ENCODE measurements at regions of chr10 and their contacts with region 1.

Region 1: DNA sequence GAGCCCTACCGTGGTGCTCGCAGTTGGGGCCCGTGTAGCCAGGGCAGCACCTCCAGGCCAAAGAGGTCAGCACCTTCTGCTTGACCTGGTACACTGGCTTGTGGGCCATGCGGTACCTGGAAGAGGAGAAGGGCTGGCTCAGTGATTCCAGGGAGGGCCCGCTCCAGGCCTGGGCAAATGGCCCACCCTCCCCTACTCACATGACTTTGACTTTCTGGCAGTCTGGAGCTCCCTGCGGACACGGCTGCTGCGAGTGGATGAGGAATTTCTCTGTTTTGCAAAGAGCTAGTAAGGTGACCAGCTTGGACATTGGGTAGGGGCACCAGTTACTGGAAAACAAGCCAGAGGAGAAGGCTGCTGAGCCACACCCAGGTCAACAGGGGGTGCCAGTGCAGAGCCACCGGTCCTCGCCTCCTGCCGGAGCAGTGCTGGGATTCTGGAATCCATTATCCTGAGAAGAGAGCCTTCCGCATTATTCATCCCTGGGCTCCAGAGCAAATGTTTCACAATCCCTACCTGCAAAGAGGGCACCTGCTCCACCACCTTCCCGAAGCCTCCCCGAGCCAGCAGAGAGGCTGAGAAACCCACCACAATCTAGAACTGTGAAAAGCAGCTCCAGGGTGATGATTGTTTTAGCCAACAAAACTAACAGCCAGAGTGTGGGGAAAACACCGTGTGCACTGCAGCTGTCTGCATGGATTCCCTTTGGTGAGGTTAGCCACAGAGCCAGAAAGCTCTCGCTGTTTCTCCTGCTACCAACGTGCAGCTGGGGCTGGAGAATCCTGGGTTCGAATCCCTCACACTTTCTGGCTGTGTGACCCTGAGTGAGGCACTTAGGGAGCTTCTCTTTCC is 11.8 kb downstream of the MMRN2 start:
- DNase-seq: peak; percentile 44
- ATAC-seq: peak; percentile 74
- H3K4me3 ChIP-seq: no peak overlapping the region
- H3K27ac ChIP-seq: no peak overlapping the region
- H3K4me1 ChIP-seq: peaks cover 31% of the 10 kb centered on the region
- H3K27me3 ChIP-seq: peaks cover 5 to 32% of the 10 kb centered on the region in 2 experiments; a peak in 3 of 5 replicates
- CTCF ChIP-seq: peak; percentile 67
- EP300 ChIP-seq: no peak
- POLR2A ChIP-seq: no peak
- RAD21 ChIP-seq: no peak

Region 2: DNA sequence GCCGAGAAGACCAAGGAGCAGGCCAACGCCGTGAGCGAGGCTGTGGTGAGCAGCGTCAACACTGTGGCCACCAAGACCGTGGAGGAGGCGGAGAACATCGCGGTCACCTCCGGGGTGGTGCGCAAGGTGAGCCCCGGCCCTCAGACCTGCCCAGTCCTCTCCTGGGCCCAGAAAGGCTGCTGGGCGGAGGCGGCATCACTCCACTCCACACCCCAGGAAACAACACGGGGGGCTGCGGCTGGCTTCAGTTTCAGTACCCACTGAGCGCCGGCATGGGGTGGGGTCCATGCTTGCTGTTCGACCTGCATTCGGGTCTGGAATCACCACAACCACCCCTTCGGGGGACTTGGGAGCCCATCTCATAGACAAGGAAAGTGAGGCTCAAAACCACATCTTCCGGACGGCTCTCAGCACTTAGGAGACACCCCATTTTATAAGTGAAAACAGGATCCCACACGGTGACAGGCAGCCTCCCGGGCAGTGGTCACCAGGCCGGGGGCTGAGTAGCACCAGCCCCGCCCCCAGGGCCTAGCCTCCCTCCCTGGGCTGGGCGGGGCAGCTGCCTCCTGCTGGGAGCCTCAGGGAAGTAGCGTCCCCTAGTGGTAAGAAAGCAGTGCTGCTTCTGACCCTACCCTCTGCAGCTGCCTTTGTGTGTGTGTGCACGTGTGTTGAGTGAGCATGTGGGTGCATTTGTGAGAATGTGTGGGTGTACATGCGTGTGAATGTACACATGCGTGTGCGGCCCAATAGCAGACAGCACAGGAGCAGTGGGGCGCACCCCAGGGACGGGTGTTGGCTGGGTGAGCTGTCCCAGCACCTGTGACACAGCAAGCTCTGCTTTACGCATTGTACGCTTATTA is 14.6 kb after region 1 on chr10:
- CTCF ChIA-PET with region 1: interaction called, 4 read pairs
- POLR2A ChIA-PET with region 1: no interaction called
- in situ Hi-C with region 1: no loop called
- intact Hi-C with region 1: loop called (anchors 1 kb)
- DNase-seq: peak; percentile 68
- ATAC-seq: peak; percentile 72
- H3K4me3 ChIP-seq: peak overlapping the region; percentile 12 to 66 (median 15); a peak in 5 of 6 replicates
- H3K27ac ChIP-seq: no peak overlapping the region
- H3K4me1 ChIP-seq: peaks cover 44% of the 10 kb centered on the region
- H3K27me3 ChIP-seq: peaks cover 11 to 75% of the 10 kb centered on the region in 2 experiments
- CTCF ChIP-seq: peak; percentile 97
- EP300 ChIP-seq: no peak
- POLR2A ChIP-seq: no peak
- RAD21 ChIP-seq: peak; percentile 80